ENCODE measurements at regions of chr9 and their contacts with region 1.

Region 1: DNA sequence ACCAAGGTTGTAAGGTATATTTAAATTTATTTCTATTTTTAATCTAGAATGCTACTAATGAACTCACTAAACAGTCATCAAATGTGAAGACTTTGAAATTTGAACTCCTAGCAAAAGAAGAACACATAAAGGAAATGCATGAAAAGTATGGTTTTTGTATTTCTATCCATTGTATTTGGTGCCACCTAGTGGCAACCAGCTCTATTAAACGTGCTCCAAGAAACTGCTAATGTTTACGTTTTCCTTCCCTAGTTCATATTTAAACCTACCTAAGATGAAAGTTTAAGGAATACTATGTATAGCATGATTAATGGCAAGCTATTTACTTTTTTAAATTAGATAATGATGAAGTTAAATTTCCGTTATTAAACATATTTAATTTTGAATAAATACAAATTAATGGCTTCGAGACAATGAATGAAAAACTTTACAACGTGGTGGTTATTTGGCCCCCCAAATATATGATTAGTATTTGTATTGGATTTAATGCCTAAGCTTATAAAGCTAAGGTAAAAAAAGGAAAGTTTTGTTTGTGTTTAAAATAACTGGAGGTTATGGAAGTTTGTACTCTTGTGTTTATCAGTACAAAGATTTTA is 115.9 kb upstream of the SH3GL2 start:
- DNase-seq: peak; percentile 14
- H3K4me3 ChIP-seq: no peak overlapping the region
- H3K27ac ChIP-seq: no peak overlapping the region
- H3K4me1 ChIP-seq: no peaks in the 10 kb centered on the region
- H3K27me3 ChIP-seq: no peaks in the 10 kb centered on the region
- CTCF ChIP-seq: peak; percentile 64 to 72 (median 69)
- EP300 ChIP-seq: no peak
- POLR2A ChIP-seq: no peak

Region 2: GRCh38 chr9:15837079-15837679 is 1625.8 kb before region 1 on chr9:
- in situ Hi-C with region 1: loop called in 1 of 4 experiments (anchors 25 kb)
- intact Hi-C with region 1: no loop called
- DNase-seq: no peak
- H3K4me3 ChIP-seq: no peak overlapping the region
- H3K27ac ChIP-seq: no peak overlapping the region
- H3K4me1 ChIP-seq: no peaks in the 10 kb centered on the region
- H3K27me3 ChIP-seq: no peaks in the 10 kb centered on the region
- CTCF ChIP-seq: peak; percentile 34 to 69 (median 64)
- EP300 ChIP-seq: no peak
- POLR2A ChIP-seq: no peak

Region 3: DNA sequence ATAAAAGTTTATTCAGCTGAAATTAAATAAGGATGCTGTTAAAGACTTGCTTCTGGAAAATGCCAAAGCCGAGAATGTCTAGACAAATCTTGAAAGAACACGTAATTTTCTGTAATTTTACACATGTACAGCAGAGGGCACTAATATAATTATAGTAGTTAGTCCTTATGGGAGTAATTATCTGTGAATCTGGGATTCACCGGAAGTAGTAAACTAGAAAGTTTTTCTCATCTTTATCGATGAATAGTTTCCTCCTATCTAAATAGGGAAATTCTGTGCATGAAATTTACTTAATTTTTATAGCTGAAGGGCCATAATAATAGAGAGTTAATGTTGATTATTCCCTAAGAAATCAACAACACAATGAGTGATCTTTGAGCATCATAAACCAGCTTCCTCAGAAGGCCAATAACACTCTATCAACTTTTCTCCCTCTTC is 346.5 kb before region 1 on chr9:
- in situ Hi-C with region 1: loop called (anchors 10 to 25 kb)
- intact Hi-C with region 1: loop called (anchors 5 kb)
- DNase-seq: no peak
- H3K4me3 ChIP-seq: no peak overlapping the region
- H3K27ac ChIP-seq: no peak overlapping the region
- H3K4me1 ChIP-seq: no peaks in the 10 kb centered on the region
- H3K27me3 ChIP-seq: no peaks in the 10 kb centered on the region
- CTCF ChIP-seq: peak; percentile 31 to 55 (median 45)
- EP300 ChIP-seq: no peak
- POLR2A ChIP-seq: no peak

Region 4: DNA sequence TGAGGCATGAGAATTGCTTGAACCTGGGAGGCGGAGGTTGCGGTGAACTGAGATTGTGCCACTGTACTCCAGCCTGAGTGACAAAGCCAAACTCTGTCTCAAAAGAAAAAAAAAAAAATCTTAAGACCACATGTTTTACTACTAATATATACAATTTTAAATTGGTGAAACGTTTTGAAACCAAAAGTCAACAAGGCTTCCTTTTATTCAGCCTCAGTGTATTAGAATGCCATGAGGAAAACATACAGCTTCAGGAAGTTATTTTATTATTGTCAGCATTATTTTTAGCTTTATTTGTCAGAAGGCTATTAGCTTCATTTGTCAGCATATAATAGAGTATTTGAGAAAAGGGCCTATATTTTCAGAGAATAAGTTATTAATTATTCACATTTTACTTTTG is 48.0 kb before region 1 on chr9:
- in situ Hi-C with region 1: no loop called
- intact Hi-C with region 1: no loop called
- DNase-seq: no peak
- H3K4me3 ChIP-seq: no peak overlapping the region
- H3K27ac ChIP-seq: peak overlapping the region in 1 of 4 donors; percentile 20
- H3K4me1 ChIP-seq: no peaks in the 10 kb centered on the region
- H3K27me3 ChIP-seq: no peaks in the 10 kb centered on the region
- CTCF ChIP-seq: no peak
- EP300 ChIP-seq: no peak
- POLR2A ChIP-seq: no peak

Region 5: DNA sequence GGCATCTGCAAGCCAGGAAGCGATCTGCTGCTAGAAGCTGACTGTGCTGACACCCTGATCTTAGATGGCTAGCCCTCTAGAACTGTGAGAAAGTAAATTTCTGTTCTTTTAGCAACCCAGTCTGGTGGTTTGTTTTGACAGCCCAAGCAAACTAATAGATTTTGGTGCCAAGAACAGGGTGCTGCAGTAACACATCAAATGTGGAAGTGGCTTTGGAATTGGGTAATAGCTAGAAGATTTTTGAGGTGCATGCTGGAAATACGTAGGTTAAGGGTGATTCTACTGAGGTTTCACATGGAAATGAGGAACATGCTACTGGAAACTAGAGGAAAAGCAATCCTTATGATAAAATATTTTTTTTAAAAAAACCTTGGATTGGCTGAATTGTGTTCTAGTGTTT is 37.6 kb before region 1 on chr9:
- in situ Hi-C with region 1: no loop called
- intact Hi-C with region 1: no loop called
- DNase-seq: no peak
- H3K4me3 ChIP-seq: no peak overlapping the region
- H3K27ac ChIP-seq: peak overlapping the region in 1 of 4 donors; percentile 4
- H3K4me1 ChIP-seq: peaks cover 0 to 9% (median 0%) of the 10 kb centered on the region in 4 donors
- H3K27me3 ChIP-seq: no peaks in the 10 kb centered on the region
- CTCF ChIP-seq: no peak
- EP300 ChIP-seq: no peak
- POLR2A ChIP-seq: no peak

Region 6: DNA sequence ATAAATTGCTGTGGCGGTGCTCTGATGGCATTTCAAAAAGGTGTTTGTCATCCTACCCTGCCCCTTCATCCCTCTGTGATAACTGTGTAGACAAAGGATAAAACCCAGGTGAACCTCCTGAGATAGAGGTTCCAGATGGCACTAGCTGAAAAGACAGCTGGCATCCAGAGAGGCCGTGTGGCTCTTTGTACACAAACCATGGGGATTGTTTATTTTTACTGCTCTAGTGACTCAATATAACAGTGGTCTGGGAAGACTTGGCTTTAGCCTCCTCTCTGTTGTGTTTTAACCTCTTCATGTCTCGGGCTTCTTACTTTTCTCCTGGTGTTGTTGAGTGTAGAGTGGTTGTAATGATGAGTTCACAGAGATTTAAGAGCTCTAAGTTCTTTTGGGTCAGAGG is 164.7 kb after region 1 on chr9:
- in situ Hi-C with region 1: no loop called
- intact Hi-C with region 1: no loop called
- DNase-seq: no peak
- H3K4me3 ChIP-seq: no peak overlapping the region
- H3K27ac ChIP-seq: no peak overlapping the region
- H3K4me1 ChIP-seq: no peaks in the 10 kb centered on the region
- H3K27me3 ChIP-seq: no peaks in the 10 kb centered on the region
- CTCF ChIP-seq: no peak
- EP300 ChIP-seq: no peak
- POLR2A ChIP-seq: no peak

Measured in transverse colon (tissue), 4 donors.